Aorta (tissue), 5 donors: ENCODE measurements at regions of chr11 and their contacts with region 1.

Region 1: GRCh38 chr11:14892036-14892567 is at the start of gene CYP2R1:
- DNase-seq: peak; percentile 97
- ATAC-seq: peak; percentile 98
- H3K4me3 ChIP-seq: peak within 1 kb of the TSS; percentile 73 to 93
- H3K27ac ChIP-seq: peak within 1 kb of the TSS; percentile 76 to 79
- H3K4me1 ChIP-seq: peaks cover 0 to 2% of the 10 kb centered on the region in 2 donors
- H3K27me3 ChIP-seq: no peaks in the 10 kb centered on the region
- total RNA-seq, gene CYP2R1: 23.1 to 26.2 TPM

Region 2: GRCh38 chr11:14290422-14290821 is 601.7 kb before region 1 on chr11:
- intact Hi-C with region 1: loop called in 1 of 2 experiments (anchors 10 kb)
- DNase-seq: no peak
- ATAC-seq: no peak
- H3K4me3 ChIP-seq: no peak overlapping the region
- H3K27ac ChIP-seq: no peak overlapping the region
- H3K4me1 ChIP-seq: no peaks in the 10 kb centered on the region
- H3K27me3 ChIP-seq: no peaks in the 10 kb centered on the region

Region 3: DNA sequence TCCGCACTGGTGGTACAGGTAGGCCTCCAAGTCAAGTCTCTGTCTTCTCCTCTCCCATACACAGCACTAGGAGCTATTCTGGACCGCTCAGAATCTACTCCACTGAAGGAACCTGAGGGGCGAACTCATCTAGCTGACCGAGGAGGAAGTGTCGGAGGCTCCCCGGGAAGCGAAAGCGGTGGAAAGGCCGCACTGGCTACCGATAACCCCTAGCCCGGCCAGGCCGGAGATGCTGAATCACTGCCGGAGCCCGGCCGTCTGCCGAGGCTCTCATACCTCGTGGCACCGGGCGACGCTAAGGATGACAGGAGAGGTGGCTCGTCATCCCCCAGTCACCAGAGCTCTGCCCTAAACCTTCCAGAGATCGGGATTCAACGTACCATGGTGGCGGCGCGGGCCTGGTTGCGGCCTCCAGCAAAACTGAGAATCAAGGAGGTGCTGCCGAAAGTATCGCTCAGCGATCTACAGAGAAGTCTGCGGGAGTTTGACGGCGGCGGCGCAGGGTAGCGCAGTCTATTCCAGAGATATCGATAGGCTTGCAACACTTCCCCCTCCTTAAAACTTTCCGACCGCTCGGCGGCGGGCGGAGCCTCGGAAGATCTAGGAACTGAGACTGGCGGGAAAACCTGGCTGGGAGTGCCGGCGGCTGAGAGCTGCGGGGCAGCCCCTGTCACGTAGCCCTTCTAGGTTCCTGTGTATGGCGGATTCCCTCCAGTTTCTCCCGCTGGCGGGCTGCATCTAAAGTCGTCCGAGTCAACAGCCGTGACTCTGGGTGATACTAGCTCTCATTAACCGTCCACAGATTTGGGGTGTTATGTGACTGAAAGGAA is 372.0 kb before region 1 on chr11 and contains the start of gene PSMA1:
- intact Hi-C with region 1: loop called (anchors 1 to 5 kb)
- DNase-seq: peak; percentile 98
- ATAC-seq: peak; percentile 100
- H3K4me3 ChIP-seq: peak within 1 kb of the TSS; percentile 60 to 95
- H3K27ac ChIP-seq: peak within 1 kb of the TSS in 1 of 2 donors; percentile 91
- H3K4me1 ChIP-seq: peaks cover 0 to 4% of the 10 kb centered on the region in 2 donors
- H3K27me3 ChIP-seq: no peaks in the 10 kb centered on the region
- total RNA-seq, gene PSMA1: 117 to 122 TPM

Region 4: GRCh38 chr11:14537134-14537599 is 354.9 kb before region 1 on chr11:
- intact Hi-C with region 1: loop called (anchors 5 kb)
- DNase-seq: peak in 1 of 2 donors; percentile 47
- ATAC-seq: peak; percentile 62
- H3K4me3 ChIP-seq: no peak overlapping the region
- H3K27ac ChIP-seq: no peak overlapping the region
- H3K4me1 ChIP-seq: peaks cover 0 to 3% of the 10 kb centered on the region in 2 donors
- H3K27me3 ChIP-seq: no peaks in the 10 kb centered on the region

Region 5: DNA sequence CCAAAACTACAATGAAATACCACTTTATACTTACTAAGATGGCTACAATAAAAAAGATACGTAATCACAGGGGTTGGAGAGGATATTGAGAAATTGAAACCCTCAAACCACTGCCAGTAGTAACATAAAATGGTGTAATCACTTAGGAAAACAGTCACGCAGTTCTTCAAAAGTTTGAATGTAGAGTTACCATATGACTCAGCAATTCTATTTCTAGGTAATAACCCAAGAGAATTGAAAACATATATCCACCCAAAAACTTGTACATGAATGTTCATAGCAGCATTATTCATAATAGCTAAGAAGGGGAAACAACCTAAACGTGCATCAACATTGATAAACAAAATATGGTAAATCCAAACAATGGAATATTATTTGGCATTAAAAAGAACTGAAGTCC is 347.5 kb before region 1 on chr11:
- intact Hi-C with region 1: loop called (anchors 5 kb)
- DNase-seq: no peak
- ATAC-seq: no peak
- H3K4me3 ChIP-seq: no peak overlapping the region
- H3K27ac ChIP-seq: no peak overlapping the region
- H3K4me1 ChIP-seq: peaks cover 0 to 3% of the 10 kb centered on the region in 2 donors
- H3K27me3 ChIP-seq: no peaks in the 10 kb centered on the region

Region 6: DNA sequence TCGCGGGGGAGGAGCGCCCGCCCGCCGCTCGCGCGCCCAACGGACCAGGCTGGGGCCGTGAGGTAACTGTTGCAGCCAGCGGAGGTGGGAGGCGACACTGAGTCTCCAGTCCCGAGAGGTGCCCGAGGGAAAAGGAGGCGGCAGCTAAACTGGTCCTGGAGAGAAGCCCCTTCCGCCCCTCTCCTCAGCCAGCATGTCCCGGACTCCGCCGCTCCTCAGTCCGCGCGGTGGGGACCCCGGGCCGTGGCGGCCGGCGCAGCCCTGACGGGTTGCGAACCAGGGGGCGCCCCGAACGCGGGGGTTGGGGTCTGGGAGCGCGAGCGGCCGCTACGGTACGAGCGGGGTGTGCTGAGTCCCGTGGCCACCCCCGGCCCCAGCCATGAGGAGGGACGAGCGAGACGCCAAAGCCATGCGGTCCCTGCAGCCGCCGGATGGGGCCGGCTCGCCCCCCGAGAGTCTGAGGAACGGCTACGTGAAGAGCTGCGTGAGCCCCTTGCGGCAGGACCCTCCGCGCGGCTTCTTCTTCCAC is 248.3 kb before region 1 on chr11 and contains the start of gene PDE3B:
- intact Hi-C with region 1: loop called (anchors 5 kb)
- DNase-seq: peak; percentile 89 to 95
- ATAC-seq: peak; percentile 89
- H3K4me3 ChIP-seq: peak within 1 kb of the TSS; percentile 43 to 79
- H3K27ac ChIP-seq: peak within 1 kb of the TSS; percentile 67 to 69
- H3K4me1 ChIP-seq: peaks cover 0 to 5% of the 10 kb centered on the region in 2 donors
- H3K27me3 ChIP-seq: no peaks in the 10 kb centered on the region
- total RNA-seq, gene PDE3B: 12.3 to 15.1 TPM